A673 (cell line): ENCODE measurements at regions of chr5 and their contacts with region 1.

Region 1: GRCh38 chr5:179919487-179920060 is 11.9 kb upstream of the TBC1D9B start:
- DNase-seq: no peak
- H3K4me3 ChIP-seq: no peak overlapping the region
- H3K27ac ChIP-seq: no peak overlapping the region
- H3K4me1 ChIP-seq: no peaks in the 10 kb centered on the region
- H3K27me3 ChIP-seq: no peaks in the 10 kb centered on the region
- CTCF ChIP-seq: no peak

Region 2: DNA sequence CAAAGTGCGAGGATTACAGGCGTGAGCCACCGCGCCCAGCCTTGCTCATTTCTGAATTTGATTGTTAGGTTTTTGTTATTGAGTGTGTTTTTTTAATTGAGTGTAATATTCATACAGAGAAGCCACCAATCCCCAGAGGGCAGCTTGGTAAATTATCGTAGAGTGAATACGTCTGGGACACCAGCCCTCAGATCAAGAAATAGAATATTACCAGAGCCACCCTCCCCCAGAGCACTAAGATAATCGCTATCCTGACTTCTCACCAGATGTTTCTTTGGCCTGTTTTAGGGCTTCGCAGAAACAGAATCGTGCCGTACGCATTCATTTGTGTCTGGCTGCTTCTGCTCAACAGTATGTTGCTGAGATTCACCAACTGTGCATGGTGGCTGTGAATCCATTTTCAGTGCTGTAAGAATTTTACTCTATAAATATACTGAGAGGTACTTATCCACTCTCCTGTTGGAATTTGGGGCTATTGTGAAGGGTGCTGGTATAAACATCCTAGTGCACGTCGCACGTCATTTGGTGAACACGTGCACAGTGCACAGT is 407.0 kb before region 1 on chr5:
- CTCF ChIA-PET with region 1: no interaction called
- POLR2A ChIA-PET with region 1: interaction called, 21 read pairs
- intact Hi-C with region 1: no loop called
- DNase-seq: no peak
- H3K4me3 ChIP-seq: no peak overlapping the region
- H3K27ac ChIP-seq: no peak overlapping the region
- H3K4me1 ChIP-seq: no peaks in the 10 kb centered on the region
- H3K27me3 ChIP-seq: no peaks in the 10 kb centered on the region
- CTCF ChIP-seq: no peak